AG04450 (cell line): ENCODE measurements at regions of chr7 and their contacts with region 1.

Region 1: GRCh38 chr7:115851291-115851690 is 179.3 kb downstream of the TFEC start:
- DNase-seq: peak; percentile 30
- H3K4me3 ChIP-seq: no peak overlapping the region
- H3K27ac ChIP-seq: no peak overlapping the region
- H3K27me3 ChIP-seq: no peaks in the 10 kb centered on the region
- CTCF ChIP-seq: peak; percentile 53

Region 2: DNA sequence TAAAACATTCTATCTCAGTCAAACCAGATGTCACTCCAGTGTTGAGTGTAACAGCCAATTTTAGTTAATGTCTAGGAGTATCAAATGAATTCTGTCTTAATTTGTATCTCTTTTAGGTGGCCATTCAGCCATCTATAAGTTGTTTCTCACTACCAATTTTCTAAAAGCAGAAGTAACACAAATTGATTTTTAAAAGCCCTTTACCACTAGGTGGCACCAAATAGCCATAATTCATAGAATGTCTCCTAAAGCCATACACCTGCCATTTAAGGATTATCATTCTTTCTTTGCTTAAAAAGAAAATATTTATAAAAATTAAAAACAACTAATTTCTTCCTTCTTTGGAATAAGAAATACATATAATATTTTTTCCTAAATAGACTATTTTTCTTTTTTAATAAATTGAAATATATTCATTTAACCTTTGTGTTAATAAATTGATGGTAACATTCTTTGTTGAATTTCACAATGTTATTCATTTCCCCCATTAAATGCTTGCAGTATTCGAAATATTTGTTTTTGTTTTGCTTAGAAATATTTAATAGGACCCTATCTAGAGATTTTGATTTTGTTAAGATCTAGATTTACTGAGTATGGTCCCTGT is 1824.7 kb before region 1 on chr7:
- CTCF ChIA-PET with region 1: interaction called, 10 read pairs
- POLR2A ChIA-PET with region 1: no interaction called
- DNase-seq: peak; percentile 24
- H3K4me3 ChIP-seq: no peak overlapping the region
- H3K27ac ChIP-seq: no peak overlapping the region
- H3K27me3 ChIP-seq: no peaks in the 10 kb centered on the region
- CTCF ChIP-seq: peak; percentile 63

Region 3: DNA sequence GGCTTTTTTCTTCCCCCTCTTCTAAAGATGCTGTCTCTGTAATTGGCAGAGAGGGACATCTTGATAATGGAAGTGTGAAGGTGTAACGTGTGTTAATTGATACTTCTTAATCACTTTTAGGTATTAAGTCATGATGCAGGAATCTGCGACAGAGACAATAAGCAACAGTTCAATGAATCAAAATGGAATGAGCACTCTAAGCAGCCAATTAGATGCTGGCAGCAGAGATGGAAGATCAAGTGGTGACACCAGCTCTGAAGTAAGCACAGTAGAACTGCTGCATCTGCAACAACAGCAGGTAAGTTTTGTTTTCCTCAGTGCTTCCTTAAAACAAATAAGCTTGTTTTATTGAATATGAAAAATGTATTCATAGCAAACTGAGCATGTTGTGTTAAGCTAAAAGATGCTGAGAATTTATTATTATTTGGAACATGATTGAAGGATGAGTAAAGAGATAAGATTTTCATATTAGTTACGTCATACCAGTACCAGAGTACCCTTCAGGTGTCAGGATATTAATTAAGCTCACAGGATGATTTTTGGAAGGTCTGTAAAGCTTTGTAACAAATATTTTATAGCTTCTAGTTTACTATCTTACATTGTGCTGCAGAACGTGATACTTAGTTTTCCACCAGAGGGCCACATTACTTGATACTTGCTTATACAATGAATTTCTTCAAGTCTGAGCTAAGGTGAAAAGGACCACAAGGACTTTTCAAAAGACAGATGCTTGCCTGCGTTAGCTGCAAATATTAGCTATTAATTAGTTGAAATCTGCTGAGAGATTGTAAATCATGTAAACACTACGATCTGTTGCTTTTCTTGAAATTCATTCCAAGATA is 1424.7 kb before region 1 on chr7:
- CTCF ChIA-PET with region 1: interaction called, 42 read pairs
- POLR2A ChIA-PET with region 1: no interaction called
- DNase-seq: no peak
- H3K4me3 ChIP-seq: no peak overlapping the region
- H3K27ac ChIP-seq: no peak overlapping the region
- H3K27me3 ChIP-seq: no peaks in the 10 kb centered on the region
- CTCF ChIP-seq: peak; percentile 55

Region 4: GRCh38 chr7:115679976-115680375 is 171.3 kb before region 1 on chr7:
- CTCF ChIA-PET with region 1: interaction called, 11 read pairs
- POLR2A ChIA-PET with region 1: no interaction called
- DNase-seq: no peak
- H3K4me3 ChIP-seq: no peak overlapping the region
- H3K27ac ChIP-seq: no peak overlapping the region
- H3K27me3 ChIP-seq: no peaks in the 10 kb centered on the region
- CTCF ChIP-seq: peak; percentile 61

Region 5: GRCh38 chr7:115789884-115790283 is 61.4 kb before region 1 on chr7:
- CTCF ChIA-PET with region 1: no interaction called
- POLR2A ChIA-PET with region 1: no interaction called
- DNase-seq: no peak
- H3K4me3 ChIP-seq: no peak overlapping the region
- H3K27ac ChIP-seq: no peak overlapping the region
- H3K27me3 ChIP-seq: no peaks in the 10 kb centered on the region
- CTCF ChIP-seq: no peak

Region 6: GRCh38 chr7:115861351-115861750 is 10.1 kb after region 1 on chr7:
- CTCF ChIA-PET with region 1: interaction called, 10 read pairs
- POLR2A ChIA-PET with region 1: no interaction called
- DNase-seq: no peak
- H3K4me3 ChIP-seq: no peak overlapping the region
- H3K27ac ChIP-seq: no peak overlapping the region
- H3K27me3 ChIP-seq: no peaks in the 10 kb centered on the region
- CTCF ChIP-seq: no peak